Mammary epithelial cell (primary cell): ENCODE measurements at regions of chr3 and their contacts with region 1.

Region 1: DNA sequence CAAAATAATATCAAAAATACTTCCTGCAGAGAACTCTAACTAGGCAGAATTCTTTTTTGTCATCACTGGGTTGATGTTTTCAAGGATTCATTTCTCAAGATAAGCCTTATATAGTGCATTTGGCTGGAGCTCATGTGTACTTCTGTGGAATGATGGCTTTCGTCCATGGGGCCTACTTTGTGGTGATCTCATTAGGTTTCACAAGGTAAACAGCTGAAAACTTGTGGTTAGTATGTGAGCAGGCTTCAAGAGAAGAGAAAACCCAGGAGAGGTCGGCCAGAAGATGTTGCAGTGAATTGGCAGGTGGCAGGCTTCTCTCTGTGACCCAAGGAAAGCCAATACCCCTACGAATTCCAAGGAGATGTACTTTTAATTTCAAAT is 121.4 kb upstream of the PHLDB2 start:
- DNase-seq: peak; percentile 90
- H3K4me3 ChIP-seq: no peak overlapping the region
- H3K27ac ChIP-seq: peak overlapping the region; percentile 97
- H3K4me1 ChIP-seq: peaks cover 72% of the 10 kb centered on the region
- H3K27me3 ChIP-seq: no peaks in the 10 kb centered on the region
- CTCF ChIP-seq: no peak

Region 2: GRCh38 chr3:111761309-111761831 is 23.7 kb after region 1 on chr3:
- CTCF ChIA-PET with region 1: no interaction called
- dilution Hi-C with region 1: no loop called
- in situ Hi-C with region 1: no loop called
- intact Hi-C with region 1: loop called (anchors 1 kb)
- DNase-seq: peak; percentile 100
- H3K4me3 ChIP-seq: no peak overlapping the region
- H3K27ac ChIP-seq: peak overlapping the region; percentile 100
- H3K4me1 ChIP-seq: peaks cover 60% of the 10 kb centered on the region
- H3K27me3 ChIP-seq: no peaks in the 10 kb centered on the region
- CTCF ChIP-seq: no peak

Region 3: GRCh38 chr3:111776827-111777483 is 39.3 kb after region 1 on chr3:
- CTCF ChIA-PET with region 1: no interaction called
- dilution Hi-C with region 1: no loop called
- in situ Hi-C with region 1: no loop called
- intact Hi-C with region 1: no loop called
- DNase-seq: no peak
- H3K4me3 ChIP-seq: no peak overlapping the region
- H3K27ac ChIP-seq: no peak overlapping the region
- H3K4me1 ChIP-seq: peaks cover 5% of the 10 kb centered on the region
- H3K27me3 ChIP-seq: no peaks in the 10 kb centered on the region
- CTCF ChIP-seq: no peak

Region 4: GRCh38 chr3:111803123-111803593 is 65.5 kb after region 1 on chr3:
- CTCF ChIA-PET with region 1: interaction called, 4 read pairs
- dilution Hi-C with region 1: no loop called
- in situ Hi-C with region 1: loop called in 1 of 2 experiments (anchors 10 kb)
- intact Hi-C with region 1: loop called (anchors 1 kb)
- DNase-seq: peak; percentile 96
- H3K4me3 ChIP-seq: peak overlapping the region in 1 of 3 experiments; percentile 4
- H3K27ac ChIP-seq: peak overlapping the region; percentile 100
- H3K4me1 ChIP-seq: peaks cover 40% of the 10 kb centered on the region
- H3K27me3 ChIP-seq: no peaks in the 10 kb centered on the region
- CTCF ChIP-seq: no peak

Region 5: GRCh38 chr3:111846717-111847116 is 109.0 kb after region 1 on chr3:
- CTCF ChIA-PET with region 1: no interaction called
- dilution Hi-C with region 1: loop called (anchors 10 kb)
- in situ Hi-C with region 1: no loop called
- intact Hi-C with region 1: no loop called
- DNase-seq: peak; percentile 93
- H3K4me3 ChIP-seq: no peak overlapping the region
- H3K27ac ChIP-seq: peak overlapping the region; percentile 84
- H3K4me1 ChIP-seq: peaks cover 44% of the 10 kb centered on the region
- H3K27me3 ChIP-seq: no peaks in the 10 kb centered on the region
- CTCF ChIP-seq: no peak

Region 6: GRCh38 chr3:111904376-111905241 is 166.9 kb after region 1 on chr3:
- CTCF ChIA-PET with region 1: no interaction called
- dilution Hi-C with region 1: no loop called
- in situ Hi-C with region 1: no loop called
- intact Hi-C with region 1: loop called (anchors 5 kb)
- DNase-seq: peak; percentile 89
- H3K4me3 ChIP-seq: no peak overlapping the region
- H3K27ac ChIP-seq: peak overlapping the region; percentile 85
- H3K4me1 ChIP-seq: peaks cover 37% of the 10 kb centered on the region
- H3K27me3 ChIP-seq: no peaks in the 10 kb centered on the region
- CTCF ChIP-seq: peak; percentile 26 to 51

Region 7: DNA sequence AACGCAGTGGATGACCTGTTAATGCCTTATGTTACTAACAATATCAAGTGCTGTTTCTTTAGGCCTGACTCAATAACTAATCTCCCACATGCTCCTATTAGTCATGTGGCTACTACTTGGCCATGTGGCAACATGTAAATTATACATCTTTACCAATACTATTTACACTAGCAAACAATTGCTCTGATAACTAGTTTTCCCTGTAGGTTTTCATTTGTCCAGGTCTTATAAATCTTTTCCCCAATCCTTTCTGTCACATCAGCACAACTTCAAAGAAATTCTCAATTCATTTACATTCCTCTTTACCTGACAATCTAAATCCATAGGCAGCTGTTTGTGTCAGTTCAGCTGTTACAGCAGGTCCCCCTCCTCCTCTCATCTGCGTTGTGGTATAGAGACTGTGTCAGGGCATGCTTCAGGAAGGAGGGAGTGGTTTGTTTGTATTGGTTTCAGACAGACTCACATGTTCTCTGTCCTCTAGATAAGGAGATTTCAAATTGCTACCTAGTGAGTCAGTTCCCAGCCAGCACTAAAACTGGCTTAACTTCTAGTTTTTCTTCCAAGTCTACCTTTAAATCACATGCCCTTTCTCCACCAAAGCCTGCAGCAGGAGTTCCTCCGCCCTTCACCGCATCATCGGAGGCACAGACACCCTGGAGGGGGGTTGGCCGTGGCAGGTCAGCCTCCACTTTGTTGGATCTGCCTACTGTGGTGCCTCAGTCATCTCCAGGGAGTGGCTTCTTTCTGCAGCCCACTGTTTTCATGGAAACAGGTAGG is 337.2 kb after region 1 on chr3:
- CTCF ChIA-PET with region 1: no interaction called
- dilution Hi-C with region 1: no loop called
- in situ Hi-C with region 1: no loop called
- intact Hi-C with region 1: loop called (anchors 10 kb)
- DNase-seq: peak; percentile 100
- H3K4me3 ChIP-seq: peak overlapping the region in 2 of 3 experiments; percentile 12 to 19
- H3K27ac ChIP-seq: peak overlapping the region; percentile 100
- H3K4me1 ChIP-seq: peaks cover 20% of the 10 kb centered on the region
- H3K27me3 ChIP-seq: no peaks in the 10 kb centered on the region
- CTCF ChIP-seq: no peak